ENCODE measurements at regions of chr13 and their contacts with region 1.

Region 1: DNA sequence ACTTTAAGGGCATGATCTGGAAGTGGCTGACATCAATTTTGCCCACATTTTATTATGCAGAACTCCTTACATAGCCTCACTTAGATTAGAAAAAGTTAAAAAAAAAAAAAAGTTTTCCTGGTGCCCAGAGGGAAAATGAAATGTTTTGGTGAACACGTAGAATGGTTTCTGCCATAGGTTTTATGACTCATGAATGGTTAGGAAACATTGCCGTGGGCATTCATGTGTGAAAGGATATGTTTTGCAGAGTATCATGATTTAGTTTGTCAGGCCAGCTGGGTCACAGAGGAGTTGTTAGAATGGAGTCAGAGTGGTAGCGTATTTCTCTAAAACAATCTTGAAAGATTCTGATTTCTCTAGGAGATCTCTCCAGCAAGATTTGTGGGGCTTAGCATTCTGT is 133.8 kb downstream of the MRPL57 start:
- DNase-seq: no peak
- ATAC-seq: no peak
- H3K4me3 ChIP-seq: no peak overlapping the region
- H3K4me3 Mint-ChIP-seq: no peak overlapping the region
- H3K27ac ChIP-seq: no peak overlapping the region
- H3K27ac Mint-ChIP-seq: no peak overlapping the region
- H3K4me1 ChIP-seq: no peaks in the 10 kb centered on the region
- H3K4me1 Mint-ChIP-seq: no peaks in the 10 kb centered on the region
- H3K27me3 ChIP-seq: no peaks in the 10 kb centered on the region
- H3K27me3 Mint-ChIP-seq: no peaks in the 10 kb centered on the region
- CTCF ChIP-seq: no peak

Region 2: GRCh38 chr13:21115231-21115630 is 195.0 kb before region 1 on chr13:
- CTCF ChIA-PET with region 1: no interaction called
- POLR2A ChIA-PET with region 1: no interaction called
- intact Hi-C with region 1: no loop called
- DNase-seq: no peak
- ATAC-seq: no peak
- H3K4me3 ChIP-seq: no peak overlapping the region
- H3K4me3 Mint-ChIP-seq: no peak overlapping the region
- H3K27ac ChIP-seq: no peak overlapping the region
- H3K27ac Mint-ChIP-seq: no peak overlapping the region
- H3K4me1 ChIP-seq: peaks cover 4% of the 10 kb centered on the region
- H3K4me1 Mint-ChIP-seq: no peaks in the 10 kb centered on the region
- H3K27me3 ChIP-seq: no peaks in the 10 kb centered on the region
- H3K27me3 Mint-ChIP-seq: no peaks in the 10 kb centered on the region
- CTCF ChIP-seq: no peak

Region 3: GRCh38 chr13:21354721-21355120 is 44.5 kb after region 1 on chr13:
- CTCF ChIA-PET with region 1: no interaction called
- POLR2A ChIA-PET with region 1: no interaction called
- intact Hi-C with region 1: loop called in 1 of 2 experiments (anchors 5 kb)
- DNase-seq: no peak
- ATAC-seq: no peak
- H3K4me3 ChIP-seq: no peak overlapping the region
- H3K4me3 Mint-ChIP-seq: no peak overlapping the region
- H3K27ac ChIP-seq: no peak overlapping the region
- H3K27ac Mint-ChIP-seq: no peak overlapping the region
- H3K4me1 ChIP-seq: no peaks in the 10 kb centered on the region
- H3K4me1 Mint-ChIP-seq: no peaks in the 10 kb centered on the region
- H3K27me3 ChIP-seq: no peaks in the 10 kb centered on the region
- H3K27me3 Mint-ChIP-seq: no peaks in the 10 kb centered on the region
- CTCF ChIP-seq: no peak